ENCODE measurements at regions of chr6 and their contacts with region 1.

Region 1: GRCh38 chr6:136563386-136564152 is 13.3 kb upstream of the MAP7 start:
- DNase-seq: no peak
- H3K4me3 ChIP-seq: no peak overlapping the region
- CTCF ChIP-seq: no peak

Region 2: GRCh38 chr6:136582711-136583471 is 19.3 kb after region 1 on chr6:
- CTCF ChIA-PET with region 1: interaction called, 10 read pairs
- POLR2A ChIA-PET with region 1: no interaction called
- DNase-seq: peak; percentile 63
- H3K4me3 ChIP-seq: no peak overlapping the region
- CTCF ChIP-seq: peak; percentile 19

Measured in AG04449 (cell line).